Ovary (tissue), 10 donors: ENCODE measurements at regions of chr2 and their contacts with region 1.

Region 1: DNA sequence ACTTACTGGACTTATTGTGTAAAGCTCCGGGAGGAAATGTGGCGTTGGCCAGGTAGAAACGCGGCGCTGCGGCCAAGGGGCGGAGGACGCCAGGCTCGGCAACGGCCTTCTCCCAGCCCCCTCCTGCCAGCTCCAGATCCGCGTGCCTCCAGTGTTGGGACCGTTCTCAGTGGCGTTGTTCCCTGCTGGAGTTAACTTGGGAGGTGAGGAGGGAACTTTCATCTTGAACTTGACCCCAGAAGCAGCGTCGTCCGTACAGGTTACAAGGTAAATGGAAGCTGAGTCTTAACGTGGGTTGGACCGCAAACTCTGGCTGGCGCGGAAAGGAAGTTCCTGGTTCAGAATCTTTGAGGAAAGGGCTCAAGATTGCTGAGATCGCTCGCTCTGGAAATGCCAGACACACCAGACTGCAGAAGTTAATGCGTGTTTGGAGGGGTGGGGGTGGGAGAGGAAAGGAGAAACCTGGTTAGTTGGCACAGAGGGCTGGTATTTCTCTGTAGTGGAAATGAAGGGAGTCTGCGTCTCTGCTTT is 1.3 kb downstream of the TANC1 start:
- DNase-seq: peak in 4 of 5 donors; percentile 35 to 57 (median 39)
- H3K4me3 ChIP-seq: peak overlapping the region; percentile 93
- H3K27ac ChIP-seq: peak overlapping the region; percentile 72 to 94
- H3K4me1 ChIP-seq: peaks cover 8% of the 10 kb centered on the region
- H3K27me3 ChIP-seq: no peaks in the 10 kb centered on the region
- CTCF ChIP-seq: no peak
- EP300 ChIP-seq: no peak
- POLR2A ChIP-seq: no peak

Region 2: DNA sequence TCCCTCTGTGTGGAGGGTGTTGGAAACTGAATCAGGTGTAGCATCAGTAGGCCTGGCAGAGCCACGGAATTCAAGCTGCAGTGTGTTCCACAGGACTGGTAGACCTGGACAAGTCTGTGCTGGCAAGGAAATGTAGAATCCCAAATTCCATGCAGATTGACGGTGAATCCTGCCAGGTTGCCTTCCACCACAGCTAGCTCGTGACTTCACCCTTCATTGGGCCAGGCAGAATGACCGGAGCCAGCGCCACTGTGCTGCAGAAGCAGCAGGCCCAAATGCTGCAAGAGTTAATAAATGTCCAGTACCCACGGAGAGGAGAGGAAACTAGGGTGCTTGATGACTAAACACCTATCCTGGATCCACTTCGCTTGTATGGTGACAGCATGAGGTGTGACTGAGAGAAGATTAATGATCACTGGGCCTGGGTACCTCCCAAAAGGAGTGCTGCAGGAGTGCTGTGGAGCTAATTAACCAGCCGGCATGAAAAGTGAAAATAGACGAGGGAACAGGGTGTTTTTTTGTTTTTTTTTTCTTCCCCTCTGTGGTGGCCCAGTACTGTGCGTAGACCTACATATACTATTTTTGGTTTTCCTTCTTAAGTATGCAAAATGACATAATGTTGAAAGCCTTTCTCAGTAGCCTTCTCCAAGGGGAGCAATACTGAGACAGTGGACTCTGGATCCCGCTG is 120.9 kb after region 1 on chr2:
- intact Hi-C with region 1: loop called in 1 of 4 experiments (anchors 10 kb)
- DNase-seq: no peak
- H3K4me3 ChIP-seq: no peak overlapping the region
- H3K27ac ChIP-seq: no peak overlapping the region
- H3K4me1 ChIP-seq: peaks cover 45% of the 10 kb centered on the region
- H3K27me3 ChIP-seq: no peaks in the 10 kb centered on the region
- CTCF ChIP-seq: no peak
- EP300 ChIP-seq: no peak
- POLR2A ChIP-seq: no peak

Region 3: GRCh38 chr2:159146996-159147666 is 177.4 kb after region 1 on chr2:
- intact Hi-C with region 1: no loop called
- DNase-seq: no peak
- H3K4me3 ChIP-seq: no peak overlapping the region
- H3K27ac ChIP-seq: no peak overlapping the region
- H3K4me1 ChIP-seq: peaks cover 8% of the 10 kb centered on the region
- H3K27me3 ChIP-seq: no peaks in the 10 kb centered on the region
- CTCF ChIP-seq: no peak
- EP300 ChIP-seq: no peak
- POLR2A ChIP-seq: no peak